CD8-positive, alpha-beta memory T cell (primary cell): ENCODE measurements at regions of chr14 and their contacts with region 1.

Region 1: GRCh38 chr14:22589096-22589839 is at the start of gene DAD1:
- DNase-seq: peak; percentile 98 to 100 (median 100)
- H3K4me3 ChIP-seq: peak within 1 kb of the TSS; percentile 90
- H3K4me3 Mint-ChIP-seq: peak within 1 kb of the TSS; percentile 92 to 99 (median 97)
- H3K27ac ChIP-seq: peak within 1 kb of the TSS; percentile 98
- H3K27ac Mint-ChIP-seq: peak within 1 kb of the TSS; percentile 95 to 100 (median 100)
- H3K4me1 ChIP-seq: peaks cover 45% of the 10 kb centered on the region
- H3K4me1 Mint-ChIP-seq: peaks cover 52 to 61% (median 57%) of the 10 kb centered on the region in 3 donors
- H3K27me3 ChIP-seq: no peaks in the 10 kb centered on the region
- H3K27me3 Mint-ChIP-seq: peaks cover 4% of the 10 kb centered on the region in 2 donors
- total RNA-seq, gene DAD1: 329 to 353 TPM

Region 2: GRCh38 chr14:22478670-22479069 is 110.6 kb before region 1 on chr14:
- CTCF ChIA-PET with region 1: no interaction called
- POLR2A ChIA-PET with region 1: no interaction called
- DNase-seq: no peak
- H3K4me3 ChIP-seq: no peak overlapping the region
- H3K4me3 Mint-ChIP-seq: peak overlapping the region in 4 of 7 donors; percentile 28 to 70 (median 54)
- H3K27ac ChIP-seq: no peak overlapping the region
- H3K27ac Mint-ChIP-seq: no peak overlapping the region
- H3K4me1 ChIP-seq: no peaks in the 10 kb centered on the region
- H3K4me1 Mint-ChIP-seq: no peaks in the 10 kb centered on the region
- H3K27me3 ChIP-seq: no peaks in the 10 kb centered on the region
- H3K27me3 Mint-ChIP-seq: no peaks in the 10 kb centered on the region

Region 3: DNA sequence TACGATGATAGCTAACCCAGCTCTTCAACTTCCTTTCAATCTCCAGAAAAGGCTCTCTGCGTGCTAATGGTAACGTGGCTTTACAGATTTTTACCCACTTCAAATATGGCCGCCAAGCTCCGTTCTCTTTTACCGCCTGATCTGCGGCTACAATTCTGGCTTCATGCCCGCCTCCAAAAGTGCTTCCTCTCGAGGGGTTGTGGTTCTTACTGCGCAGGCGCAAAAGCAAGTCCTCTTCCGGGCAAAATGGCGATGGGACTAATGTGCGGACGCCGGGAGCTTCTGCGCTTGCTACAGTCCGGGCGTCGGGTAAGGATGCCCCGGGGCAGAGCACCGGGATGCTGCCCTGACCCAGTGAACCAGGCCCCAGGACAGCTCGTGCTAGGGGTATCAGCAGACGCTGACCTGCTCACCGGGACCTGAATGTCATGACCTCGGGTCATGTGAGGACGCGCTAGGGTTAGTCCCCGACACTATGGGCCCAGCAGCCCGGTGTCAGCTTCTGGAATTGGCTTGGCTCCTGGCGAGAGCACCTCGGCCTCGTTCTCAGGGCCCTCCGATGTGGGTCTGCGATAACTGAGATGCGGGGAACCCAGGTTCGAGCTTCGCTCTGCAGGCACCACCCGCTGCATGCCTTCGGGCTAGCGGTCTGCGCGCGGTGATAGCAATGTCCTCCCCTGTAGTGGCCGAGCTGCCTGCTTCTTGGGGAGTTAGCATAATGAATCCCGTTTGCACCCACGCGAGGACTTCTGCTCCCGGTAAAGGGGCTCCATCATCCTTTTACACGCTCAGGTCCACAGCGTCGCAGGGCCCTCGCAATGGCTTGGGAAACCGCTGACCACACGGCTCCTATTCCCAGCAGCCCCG is 177.4 kb after region 1 on chr14 and contains the start of gene OXA1L:
- CTCF ChIA-PET with region 1: no interaction called
- POLR2A ChIA-PET with region 1: interaction called, 11 read pairs
- DNase-seq: peak; percentile 93 to 99 (median 96)
- H3K4me3 ChIP-seq: peak within 1 kb of the TSS; percentile 71
- H3K4me3 Mint-ChIP-seq: peak within 1 kb of the TSS; percentile 92 to 98 (median 96)
- H3K27ac ChIP-seq: peak within 1 kb of the TSS; percentile 77
- H3K27ac Mint-ChIP-seq: peak within 1 kb of the TSS; percentile 81 to 99 (median 98)
- H3K4me1 ChIP-seq: peaks cover 21% of the 10 kb centered on the region
- H3K4me1 Mint-ChIP-seq: peaks cover 32 to 40% (median 39%) of the 10 kb centered on the region in 3 donors
- H3K27me3 ChIP-seq: no peaks in the 10 kb centered on the region
- H3K27me3 Mint-ChIP-seq: peaks cover 0 to 1% of the 10 kb centered on the region in 2 donors
- total RNA-seq, gene OXA1L: 126 to 128 TPM